ENCODE measurements at regions of chr1 and their contacts with region 1.

Region 1: GRCh38 chr1:53393325-53393792 is 65.5 kb upstream of the LRP8 start:
- DNase-seq: peak; percentile 54
- H3K4me3 Mint-ChIP-seq: no peak overlapping the region
- H3K27ac Mint-ChIP-seq: no peak overlapping the region
- H3K4me1 Mint-ChIP-seq: no peaks in the 10 kb centered on the region
- H3K27me3 Mint-ChIP-seq: peaks cover 10% of the 10 kb centered on the region

Region 2: GRCh38 chr1:53127306-53127945 is 265.9 kb before region 1 on chr1:
- intact Hi-C with region 1: no loop called
- DNase-seq: no peak
- H3K4me3 Mint-ChIP-seq: no peak overlapping the region
- H3K27ac Mint-ChIP-seq: no peak overlapping the region
- H3K4me1 Mint-ChIP-seq: no peaks in the 10 kb centered on the region
- H3K27me3 Mint-ChIP-seq: no peaks in the 10 kb centered on the region

Region 3: DNA sequence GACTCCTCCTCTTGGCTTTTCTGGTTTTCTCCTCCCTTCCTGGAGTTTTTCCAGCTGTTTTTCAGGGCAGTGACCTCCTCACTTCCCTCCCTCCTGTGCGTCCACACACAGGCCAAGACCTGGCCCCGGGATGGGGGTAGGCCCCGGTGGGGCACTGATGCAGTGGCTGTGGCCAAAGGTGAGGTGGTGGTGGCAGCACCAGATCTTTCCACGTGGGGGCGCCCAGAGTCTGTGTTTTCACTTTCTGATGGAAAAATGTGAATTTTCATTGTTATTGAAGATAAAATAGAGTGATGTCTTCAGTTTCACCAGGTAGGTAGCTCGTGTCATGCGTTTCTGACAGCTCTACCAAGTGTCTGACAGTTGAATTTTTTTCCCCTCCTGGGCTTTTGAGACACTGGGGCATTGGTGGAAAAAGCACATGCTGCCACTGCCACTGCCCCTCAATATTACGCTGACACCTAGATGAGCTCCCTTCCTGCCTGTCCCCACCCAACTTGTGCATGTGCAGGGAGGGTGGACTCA is 115.1 kb before region 1 on chr1:
- intact Hi-C with region 1: loop called (anchors 1 kb)
- DNase-seq: peak; percentile 62
- H3K4me3 Mint-ChIP-seq: no peak overlapping the region
- H3K27ac Mint-ChIP-seq: peak overlapping the region; percentile 58
- H3K4me1 Mint-ChIP-seq: no peaks in the 10 kb centered on the region
- H3K27me3 Mint-ChIP-seq: no peaks in the 10 kb centered on the region

Region 4: DNA sequence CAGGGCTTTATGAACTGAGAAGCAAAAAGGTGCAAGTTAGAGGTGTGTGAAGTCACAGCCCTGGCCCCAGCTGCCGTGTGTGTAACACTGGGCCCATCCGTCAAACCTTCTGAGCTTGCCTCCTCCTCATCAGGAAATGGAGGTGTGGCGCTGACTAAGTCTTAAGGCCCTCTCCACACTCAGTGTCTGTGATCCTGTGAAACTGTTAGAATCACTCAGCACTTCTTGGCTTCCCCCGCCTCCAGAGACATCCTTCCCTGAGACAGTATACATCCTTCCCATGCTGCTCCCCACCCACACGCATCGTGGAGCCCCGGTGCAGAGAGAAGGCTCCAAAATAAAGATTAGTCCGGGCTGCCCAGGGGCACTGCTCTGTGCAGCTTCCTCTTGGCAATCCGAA is 98.8 kb before region 1 on chr1:
- intact Hi-C with region 1: loop called (anchors 5 kb)
- DNase-seq: peak; percentile 16
- H3K4me3 Mint-ChIP-seq: no peak overlapping the region
- H3K27ac Mint-ChIP-seq: peak overlapping the region; percentile 43
- H3K4me1 Mint-ChIP-seq: peaks cover 42% of the 10 kb centered on the region
- H3K27me3 Mint-ChIP-seq: no peaks in the 10 kb centered on the region

Measured in activated T-helper 2 cell treated with anti-CD3 and anti-CD28 coated beads, Interferon-gamma antibody, Interleukin-2, Interleukin-4, amounts not matched to agents 10 μg/mL and 5 μg/mL and 100 μg/mL, durations not matched to agents 14 hours and 24 hours and 36 hours (primary cell).